ENCODE measurements at regions of chr12 and their contacts with region 1.

Region 1: GRCh38 chr12:104877123-104877705 is 80.9 kb downstream of the SLC41A2 start:
- DNase-seq: no peak
- H3K4me3 ChIP-seq: no peak overlapping the region
- H3K27ac ChIP-seq: no peak overlapping the region
- H3K4me1 ChIP-seq: peaks cover 0 to 2% of the 10 kb centered on the region in 2 donors
- H3K27me3 ChIP-seq: no peaks in the 10 kb centered on the region
- CTCF ChIP-seq: peak; percentile 46 to 83 (median 77)

Region 2: DNA sequence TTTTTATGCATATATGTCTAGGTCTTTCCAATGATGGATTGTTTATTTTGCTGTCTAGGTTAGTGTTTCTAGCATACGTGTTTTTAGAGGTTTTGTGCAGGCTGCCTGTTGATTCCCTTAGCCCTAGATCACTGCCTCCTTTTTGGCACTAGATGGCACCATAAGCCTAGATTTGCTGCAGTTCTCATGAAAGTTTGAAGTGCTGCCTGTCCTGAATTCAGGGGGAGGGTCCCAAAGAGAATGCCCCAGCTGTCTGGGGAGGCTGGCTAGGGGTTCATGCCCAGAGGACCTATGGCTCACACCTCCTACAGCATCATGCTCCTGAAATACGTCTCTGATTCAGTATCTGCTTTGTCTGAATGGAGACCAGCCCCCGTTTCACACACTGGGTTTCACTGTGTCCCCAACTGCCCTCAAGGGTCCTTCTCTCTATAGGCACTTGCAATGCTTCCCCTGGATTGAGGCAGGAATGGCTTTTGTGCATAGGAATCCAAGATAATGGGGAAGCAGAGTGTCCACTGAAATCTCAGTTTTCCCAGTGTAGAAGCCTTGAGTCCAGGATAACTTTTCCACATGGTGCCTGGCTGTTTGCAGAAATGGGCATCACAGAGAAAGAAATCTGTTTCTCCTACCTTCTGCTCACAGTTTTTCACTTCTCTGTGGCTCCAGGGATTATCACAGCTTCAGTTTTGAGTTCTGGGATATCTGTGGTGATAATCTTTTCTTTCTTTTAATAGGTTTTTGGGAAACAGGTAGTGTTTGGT is 675.8 kb before region 1 on chr12:
- intact Hi-C with region 1: loop called (anchors 5 kb)
- DNase-seq: peak in 1 of 2 donors; percentile 69
- H3K4me3 ChIP-seq: no peak overlapping the region
- H3K27ac ChIP-seq: no peak overlapping the region
- H3K4me1 ChIP-seq: peaks cover 0 to 14% of the 10 kb centered on the region in 2 donors
- H3K27me3 ChIP-seq: no peaks in the 10 kb centered on the region
- CTCF ChIP-seq: peak; percentile 80 to 84 (median 83)

Region 3: DNA sequence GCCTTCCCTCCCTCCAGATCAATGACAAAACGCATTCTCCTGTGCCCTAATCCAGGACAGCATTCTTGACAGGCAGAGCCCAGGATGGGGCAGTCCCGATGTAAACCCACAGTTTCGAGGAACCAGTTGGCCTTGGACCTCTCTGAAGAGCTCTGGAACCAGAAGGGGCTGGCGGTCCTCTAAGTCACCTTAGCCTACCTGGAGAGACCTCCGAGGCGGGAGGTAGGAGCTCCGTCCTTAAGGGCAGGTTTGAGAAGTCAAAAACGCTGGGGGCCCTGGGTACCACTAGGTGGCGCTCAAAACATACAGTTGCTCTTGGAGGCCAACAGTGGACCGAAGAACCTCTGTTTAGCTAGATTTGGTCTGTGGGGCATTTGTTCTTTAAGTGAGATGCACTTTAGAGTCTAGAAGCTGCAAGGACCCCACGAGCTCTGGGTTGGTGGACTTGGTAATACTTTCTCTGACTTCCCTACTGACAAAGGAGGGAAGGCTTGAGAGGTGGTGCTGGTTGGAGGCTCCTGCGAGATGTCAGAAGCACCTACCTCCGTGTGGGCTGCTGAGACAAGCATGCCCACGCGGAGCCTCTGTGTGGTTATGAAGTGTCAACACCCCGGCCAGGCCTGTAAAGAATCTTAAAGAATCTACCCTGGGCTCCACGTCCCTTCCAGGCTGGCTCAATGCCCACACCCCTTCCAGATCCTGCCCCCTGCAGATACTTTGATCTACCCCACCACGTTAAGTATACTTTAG is 495.3 kb before region 1 on chr12:
- intact Hi-C with region 1: loop called (anchors 2 kb)
- DNase-seq: peak; percentile 16 to 85
- H3K4me3 ChIP-seq: peak overlapping the region in 1 of 2 donors; percentile 15
- H3K27ac ChIP-seq: no peak overlapping the region
- H3K4me1 ChIP-seq: peaks cover 0 to 8% of the 10 kb centered on the region in 2 donors
- H3K27me3 ChIP-seq: no peaks in the 10 kb centered on the region
- CTCF ChIP-seq: peak; percentile 88 to 93 (median 93)

Region 4: DNA sequence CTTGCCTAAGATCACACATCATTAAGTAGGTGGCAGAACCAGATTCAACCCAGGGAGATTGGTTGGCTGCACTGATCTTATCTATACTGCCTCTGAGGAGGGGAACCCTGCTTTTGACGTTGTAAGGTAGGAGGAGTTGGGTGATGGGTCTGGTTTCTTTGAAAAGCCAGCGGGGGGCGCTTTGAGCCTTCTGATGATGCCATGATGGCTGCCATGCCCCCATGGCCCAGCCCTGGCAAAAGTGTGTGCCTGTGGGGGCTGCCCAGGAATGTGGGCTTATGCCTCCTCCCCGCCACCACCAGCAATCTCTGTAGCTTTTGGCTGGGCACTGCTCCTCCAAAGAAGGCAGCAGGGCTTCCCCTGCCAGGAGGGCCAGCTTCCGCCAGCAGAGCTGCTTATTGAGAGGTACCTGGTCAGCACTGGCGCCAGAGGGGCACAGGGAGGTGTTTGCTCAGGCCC is 143.5 kb before region 1 on chr12:
- intact Hi-C with region 1: loop called (anchors 5 kb)
- DNase-seq: peak in 1 of 2 donors; percentile 67
- H3K4me3 ChIP-seq: no peak overlapping the region
- H3K27ac ChIP-seq: peak overlapping the region; percentile 12 to 34
- H3K4me1 ChIP-seq: peaks cover 0 to 40% of the 10 kb centered on the region in 2 donors
- H3K27me3 ChIP-seq: no peaks in the 10 kb centered on the region
- CTCF ChIP-seq: peak in 1 of 3 experiments; percentile 53

Region 5: GRCh38 chr12:105025890-105026289 is 148.7 kb after region 1 on chr12:
- intact Hi-C with region 1: no loop called
- DNase-seq: peak; percentile 23 to 88
- H3K4me3 ChIP-seq: no peak overlapping the region
- H3K27ac ChIP-seq: peak overlapping the region; percentile 63 to 81
- H3K4me1 ChIP-seq: peaks cover 3 to 22% of the 10 kb centered on the region in 2 donors
- H3K27me3 ChIP-seq: no peaks in the 10 kb centered on the region
- CTCF ChIP-seq: no peak

Region 6: DNA sequence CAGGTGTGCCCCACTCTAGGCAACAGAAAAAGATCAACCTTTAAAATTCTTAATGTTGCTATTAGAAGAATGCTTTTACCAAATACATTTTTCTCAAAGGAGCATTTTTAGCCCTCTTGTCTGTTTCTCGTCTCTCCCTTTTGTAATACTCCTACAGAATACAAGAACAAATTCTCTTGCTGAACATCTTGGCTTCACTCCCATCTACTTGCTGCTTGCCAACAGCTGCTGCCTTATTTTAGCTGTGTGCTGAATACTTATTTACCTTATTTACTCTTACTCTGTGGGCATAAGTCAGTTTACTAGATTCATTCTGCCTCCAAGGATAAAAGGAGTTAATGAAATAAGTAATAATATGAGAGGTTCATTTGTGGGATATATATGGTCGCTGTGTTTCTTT is 1551.2 kb after region 1 on chr12:
- intact Hi-C with region 1: no loop called
- DNase-seq: no peak
- H3K4me3 ChIP-seq: no peak overlapping the region
- H3K27ac ChIP-seq: no peak overlapping the region
- H3K4me1 ChIP-seq: no peaks in the 10 kb centered on the region
- H3K27me3 ChIP-seq: no peaks in the 10 kb centered on the region
- CTCF ChIP-seq: no peak

Measured in ascending aorta (tissue), 2 donors.